Heart left ventricle (tissue), 16 donors: ENCODE measurements at regions of chr13 and their contacts with region 1.

Region 1: GRCh38 chr13:39263033-39263432 is 224.8 kb downstream of the NHLRC3 start:
- DNase-seq: peak in 4 of 5 donors; percentile 37 to 42 (median 41)
- ATAC-seq: peak; percentile 76 to 89 (median 88)
- H3K4me3 ChIP-seq: no peak overlapping the region
- H3K27ac ChIP-seq: peak overlapping the region in 8 of 12 donors; percentile 13 to 80 (median 46)
- H3K4me1 ChIP-seq: peaks cover 5 to 59% (median 31%) of the 10 kb centered on the region in 12 donors
- H3K27me3 ChIP-seq: no peaks in the 10 kb centered on the region
- CTCF ChIP-seq: peak; percentile 54 to 82 (median 71)
- POLR2A ChIP-seq: no peak

Region 2: DNA sequence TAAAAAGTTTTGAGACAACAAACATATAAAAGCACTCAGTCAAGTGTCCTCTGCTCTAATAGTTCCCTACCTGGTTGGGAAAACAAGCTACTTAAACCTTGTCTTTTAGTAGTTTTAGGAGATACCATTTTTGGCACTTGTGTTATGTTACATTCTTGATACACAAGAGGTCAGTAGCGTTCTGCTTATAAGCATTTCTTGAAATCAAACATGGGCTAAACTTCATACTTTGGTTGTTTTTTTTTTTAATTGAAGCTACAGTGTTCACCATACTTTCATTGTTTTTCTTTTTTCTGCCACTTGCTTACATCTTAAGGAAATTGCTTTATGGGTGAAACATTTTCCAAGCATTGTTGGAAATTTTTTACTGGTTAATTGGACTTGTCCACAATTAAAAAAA is 211.9 kb before region 1 on chr13:
- intact Hi-C with region 1: loop called in 9 of 10 experiments (anchors 2 to 10 kb)
- DNase-seq: no peak
- ATAC-seq: peak in 1 of 4 donors; percentile 41
- H3K4me3 ChIP-seq: no peak overlapping the region
- H3K27ac ChIP-seq: no peak overlapping the region
- H3K4me1 ChIP-seq: no peaks in the 10 kb centered on the region
- H3K27me3 ChIP-seq: no peaks in the 10 kb centered on the region
- CTCF ChIP-seq: peak; percentile 18 to 73 (median 55)
- POLR2A ChIP-seq: no peak

Region 3: GRCh38 chr13:39144941-39145533 is 118.0 kb before region 1 on chr13:
- intact Hi-C with region 1: loop called (anchors 1 to 5 kb)
- DNase-seq: peak in 4 of 5 donors; percentile 47 to 65 (median 62)
- ATAC-seq: peak; percentile 57 to 77 (median 74)
- H3K4me3 ChIP-seq: peak overlapping the region in 7 of 12 donors; percentile 13 to 52 (median 21)
- H3K27ac ChIP-seq: peak overlapping the region in 6 of 12 donors; percentile 1 to 47 (median 23)
- H3K4me1 ChIP-seq: peaks cover 0 to 20% (median 0%) of the 10 kb centered on the region in 12 donors
- H3K27me3 ChIP-seq: no peaks in the 10 kb centered on the region
- CTCF ChIP-seq: peak; percentile 62 to 91 (median 84)
- POLR2A ChIP-seq: no peak

Region 4: DNA sequence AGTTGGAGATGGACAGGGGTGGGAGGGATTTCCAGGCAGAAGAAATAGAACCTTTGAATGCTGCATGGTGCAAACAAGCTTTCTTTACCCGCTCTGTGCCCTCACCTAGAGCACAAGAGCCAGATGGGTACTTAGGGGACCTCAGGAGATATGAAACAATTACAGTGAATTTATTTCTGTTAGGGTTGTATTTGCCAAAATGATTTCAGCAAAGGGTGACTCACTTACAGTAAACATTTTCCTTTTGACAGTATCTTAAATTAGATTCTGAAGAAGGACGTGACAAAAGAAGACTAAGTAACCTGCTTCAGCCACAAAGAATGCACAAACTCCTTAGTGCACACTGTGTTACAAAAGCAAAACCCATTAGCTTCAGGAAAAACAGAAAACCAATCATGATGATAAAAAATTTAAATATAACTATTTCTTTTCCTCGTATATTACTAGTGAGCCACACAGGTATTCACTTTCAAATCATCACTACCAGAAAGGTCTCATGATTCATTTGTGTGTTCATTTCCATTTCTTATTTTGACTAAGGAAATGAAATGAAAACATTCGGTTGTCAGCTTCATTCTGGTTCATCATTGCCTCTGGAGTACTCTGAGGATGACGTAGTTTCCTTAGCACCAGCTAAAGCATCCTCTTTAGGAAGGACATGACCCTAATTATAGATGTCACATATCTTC is 65.9 kb before region 1 on chr13:
- intact Hi-C with region 1: loop called in 1 of 10 experiments (anchors 5 kb)
- DNase-seq: no peak
- ATAC-seq: peak in 3 of 4 donors; percentile 61 to 66 (median 65)
- H3K4me3 ChIP-seq: no peak overlapping the region
- H3K27ac ChIP-seq: peak overlapping the region in 11 of 12 donors; percentile 1 to 64 (median 19)
- H3K4me1 ChIP-seq: peaks cover 0 to 27% (median 12%) of the 10 kb centered on the region in 12 donors
- H3K27me3 ChIP-seq: no peaks in the 10 kb centered on the region
- CTCF ChIP-seq: no peak
- POLR2A ChIP-seq: no peak

Region 5: GRCh38 chr13:39406688-39407087 is 143.7 kb after region 1 on chr13:
- intact Hi-C with region 1: loop called in 3 of 10 experiments (anchors 5 kb)
- DNase-seq: no peak
- ATAC-seq: no peak
- H3K4me3 ChIP-seq: no peak overlapping the region
- H3K27ac ChIP-seq: no peak overlapping the region
- H3K4me1 ChIP-seq: peaks cover 0 to 84% (median 57%) of the 10 kb centered on the region in 12 donors
- H3K27me3 ChIP-seq: no peaks in the 10 kb centered on the region
- CTCF ChIP-seq: no peak
- POLR2A ChIP-seq: no peak

Region 6: GRCh38 chr13:39777527-39778061 is 514.6 kb after region 1 on chr13:
- intact Hi-C with region 1: no loop called
- DNase-seq: peak in 1 of 5 donors; percentile 31
- ATAC-seq: peak in 1 of 4 donors; percentile 46
- H3K4me3 ChIP-seq: no peak overlapping the region
- H3K27ac ChIP-seq: no peak overlapping the region
- H3K4me1 ChIP-seq: peaks cover 0 to 20% (median 0%) of the 10 kb centered on the region in 12 donors
- H3K27me3 ChIP-seq: no peaks in the 10 kb centered on the region
- CTCF ChIP-seq: peak in 6 of 12 donors; percentile 2 to 32 (median 16)
- POLR2A ChIP-seq: no peak